HCT116 (cell line): ENCODE measurements at regions of chr9 and their contacts with region 1.

Region 1: GRCh38 chr9:32378993-32379729 is 5.3 kb upstream of the ACO1 start:
- DNase-seq: peak; percentile 67
- ATAC-seq: peak; percentile 79
- H3K4me3 ChIP-seq: no peak overlapping the region
- H3K27ac ChIP-seq: no peak overlapping the region
- H3K4me1 ChIP-seq: peaks cover 0 to 14% of the 10 kb centered on the region in 2 experiments; a peak in 3 of 4 replicates
- H3K27me3 ChIP-seq: no peaks in the 10 kb centered on the region
- CTCF ChIP-seq: peak; percentile 77 to 94 (median 86)
- POLR2A ChIP-seq: no peak
- RAD21 ChIP-seq: peak; percentile 95

Region 2: GRCh38 chr9:32180597-32180996 is 198.6 kb before region 1 on chr9:
- CTCF ChIA-PET with region 1: no interaction called
- POLR2A ChIA-PET with region 1: no interaction called
- RAD21 ChIA-PET with region 1: no interaction called
- intact Hi-C with region 1: no loop called
- DNase-seq: no peak
- ATAC-seq: no peak
- H3K4me3 ChIP-seq: no peak overlapping the region
- H3K27ac ChIP-seq: no peak overlapping the region
- H3K4me1 ChIP-seq: no peaks in the 10 kb centered on the region
- H3K27me3 ChIP-seq: no peaks in the 10 kb centered on the region
- CTCF ChIP-seq: no peak
- POLR2A ChIP-seq: no peak
- RAD21 ChIP-seq: no peak

Region 3: DNA sequence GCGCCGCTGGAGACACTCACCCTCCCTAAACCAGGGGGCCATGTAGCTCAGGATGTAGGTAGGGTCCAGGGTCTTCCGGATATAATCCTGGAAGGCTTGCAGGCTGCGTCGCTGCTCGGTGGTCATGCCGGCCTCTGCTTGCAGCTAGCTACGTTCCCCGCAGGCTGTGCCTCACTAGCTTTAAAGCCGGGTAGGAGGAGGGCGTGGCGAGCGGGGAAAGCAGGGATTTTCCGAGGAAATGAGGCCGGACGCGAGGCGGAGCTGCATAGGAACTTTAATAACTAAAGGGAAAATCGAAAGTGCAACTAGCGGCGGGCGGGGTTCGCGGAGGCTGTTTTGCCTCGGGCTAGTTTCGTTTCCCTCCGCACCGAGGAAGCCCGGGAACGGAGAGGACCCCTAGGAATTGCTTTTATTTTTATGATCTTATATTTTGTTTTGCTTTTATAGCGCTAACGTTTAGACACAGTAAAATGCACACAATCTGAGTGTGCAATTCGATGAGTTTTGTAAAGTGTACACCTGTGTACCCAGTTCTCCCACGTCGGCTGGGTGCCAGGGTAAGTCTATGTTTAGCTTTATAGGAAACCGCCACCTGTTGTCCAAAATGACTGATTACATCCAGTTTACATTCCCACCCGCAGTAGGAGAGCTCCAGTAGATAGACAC is 147.0 kb after region 1 on chr9 and contains the start of gene RIGI:
- CTCF ChIA-PET with region 1: interaction called, 62 read pairs
- POLR2A ChIA-PET with region 1: interaction called, 3 read pairs
- RAD21 ChIA-PET with region 1: interaction called, 6 to 8 read pairs
- intact Hi-C with region 1: loop called (anchors 1 kb)
- DNase-seq: peak; percentile 85
- ATAC-seq: peak; percentile 86
- H3K4me3 ChIP-seq: peak within 1 kb of the TSS; percentile 76 to 81
- H3K27ac ChIP-seq: peak within 1 kb of the TSS; percentile 76
- H3K4me1 ChIP-seq: peaks cover 11 to 22% of the 10 kb centered on the region in 2 experiments; a peak in 3 of 4 replicates
- H3K27me3 ChIP-seq: no peaks in the 10 kb centered on the region
- CTCF ChIP-seq: peak; percentile 49 to 59 (median 50); a peak in 5 of 6 replicates
- POLR2A ChIP-seq: no peak
- RAD21 ChIP-seq: peak; percentile 73
- total RNA-seq, gene RIGI: 5.5 TPM

Region 4: GRCh38 chr9:32571969-32572899 is 193.1 kb after region 1 on chr9:
- CTCF ChIA-PET with region 1: interaction called, 553 read pairs
- POLR2A ChIA-PET with region 1: interaction called, 4 read pairs
- RAD21 ChIA-PET with region 1: interaction called, 10 to 18 read pairs
- intact Hi-C with region 1: loop called (anchors 1 kb)
- DNase-seq: peak; percentile 67
- ATAC-seq: peak; percentile 85
- H3K4me3 ChIP-seq: peak overlapping the region; percentile 86 to 89
- H3K27ac ChIP-seq: peak overlapping the region; percentile 80
- H3K4me1 ChIP-seq: peaks cover 4 to 15% of the 10 kb centered on the region in 2 experiments; a peak in 3 of 4 replicates
- H3K27me3 ChIP-seq: no peaks in the 10 kb centered on the region
- CTCF ChIP-seq: peak; percentile 77 to 82 (median 82)
- POLR2A ChIP-seq: no peak
- RAD21 ChIP-seq: peak; percentile 73

Region 5: DNA sequence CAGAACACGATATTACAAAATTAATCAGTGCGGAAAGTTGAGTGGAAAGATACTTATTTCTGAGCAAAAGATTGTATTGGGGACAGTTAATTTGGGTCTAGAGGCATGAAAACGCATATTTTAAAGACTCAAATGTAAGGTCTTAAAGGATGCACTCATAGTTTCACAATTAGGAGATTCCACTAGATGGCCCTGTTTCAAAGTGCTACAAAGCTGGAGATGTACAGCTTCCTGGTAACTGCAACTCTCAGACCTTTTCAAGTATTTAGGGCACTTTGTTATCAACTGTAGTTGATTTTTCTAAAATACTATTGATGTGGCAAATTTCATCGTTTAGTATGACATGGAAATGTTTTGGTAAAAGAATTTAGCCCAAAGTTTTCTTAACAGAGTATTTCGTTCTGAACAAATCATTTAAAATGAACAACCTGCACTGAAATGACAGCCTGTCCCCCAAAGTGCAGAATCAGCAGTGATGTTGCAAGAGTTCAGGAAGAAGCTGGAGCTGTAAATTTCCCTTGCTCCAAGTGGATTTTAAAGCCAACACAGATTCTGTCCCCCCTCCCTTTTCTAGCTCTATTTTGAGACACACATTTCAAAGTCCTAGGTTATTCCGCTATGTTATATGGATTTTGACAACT is 210.0 kb after region 1 on chr9:
- CTCF ChIA-PET with region 1: interaction called, 553 read pairs
- POLR2A ChIA-PET with region 1: no interaction called
- RAD21 ChIA-PET with region 1: no interaction called
- intact Hi-C with region 1: no loop called
- DNase-seq: peak; percentile 38
- ATAC-seq: peak; percentile 84
- H3K4me3 ChIP-seq: no peak overlapping the region
- H3K27ac ChIP-seq: no peak overlapping the region
- H3K4me1 ChIP-seq: no peaks in the 10 kb centered on the region
- H3K27me3 ChIP-seq: no peaks in the 10 kb centered on the region
- CTCF ChIP-seq: peak; percentile 59 to 73 (median 66); a peak in 5 of 6 replicates
- POLR2A ChIP-seq: no peak
- RAD21 ChIP-seq: peak; percentile 83

Region 6: DNA sequence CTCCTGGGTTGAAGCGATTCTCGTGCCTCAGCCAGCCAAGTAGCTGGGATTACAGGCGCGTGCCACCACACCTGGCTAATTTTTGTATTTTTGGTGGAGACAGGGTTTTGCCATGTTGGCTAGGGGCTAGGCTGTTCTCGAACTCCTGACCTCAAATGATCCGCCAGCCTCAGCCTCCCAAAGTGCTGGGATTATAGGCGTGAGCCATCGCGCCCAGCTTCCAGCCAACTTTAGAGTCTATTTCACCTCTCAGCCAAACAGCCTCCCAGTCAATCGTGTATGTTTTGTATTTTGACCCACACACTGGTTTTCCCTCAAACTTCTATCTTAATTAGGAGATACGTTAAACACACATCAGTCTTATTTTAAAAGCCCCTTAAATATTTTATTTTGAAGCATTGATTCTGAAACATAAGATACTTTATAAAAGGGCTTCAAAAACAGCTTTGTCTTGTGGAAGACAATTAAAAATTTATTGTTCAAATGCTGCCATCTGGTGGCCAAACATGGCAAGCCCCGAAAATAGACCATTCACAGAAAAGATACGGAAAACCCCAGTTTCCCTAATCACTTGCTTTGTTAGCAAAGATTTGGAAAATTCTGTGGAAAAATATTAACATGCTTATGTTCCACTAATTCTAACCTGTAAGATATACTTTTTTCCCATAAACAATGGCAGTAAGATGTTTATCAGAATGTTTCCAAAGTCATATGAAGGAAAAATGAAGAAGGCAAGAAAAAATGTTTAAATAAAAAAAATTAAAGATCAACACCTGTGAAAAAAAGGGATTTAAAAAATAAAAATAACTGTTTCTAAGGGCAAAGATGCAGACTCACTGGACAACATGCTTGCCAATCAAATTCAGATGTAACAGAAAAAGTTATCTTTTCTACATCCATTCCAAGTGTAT is 589.2 kb after region 1 on chr9:
- CTCF ChIA-PET with region 1: interaction called, 40 read pairs
- POLR2A ChIA-PET with region 1: no interaction called
- RAD21 ChIA-PET with region 1: interaction called in 1 of 2 experiments, 3 read pairs
- intact Hi-C with region 1: loop called (anchors 2 kb)
- DNase-seq: peak; percentile 6
- ATAC-seq: no peak
- H3K4me3 ChIP-seq: no peak overlapping the region
- H3K27ac ChIP-seq: no peak overlapping the region
- H3K4me1 ChIP-seq: no peaks in the 10 kb centered on the region
- H3K27me3 ChIP-seq: no peaks in the 10 kb centered on the region
- CTCF ChIP-seq: peak; percentile 73 to 89 (median 82)
- POLR2A ChIP-seq: no peak
- RAD21 ChIP-seq: peak; percentile 78